ENCODE measurements at regions of chr5 and their contacts with region 1.

Region 1: DNA sequence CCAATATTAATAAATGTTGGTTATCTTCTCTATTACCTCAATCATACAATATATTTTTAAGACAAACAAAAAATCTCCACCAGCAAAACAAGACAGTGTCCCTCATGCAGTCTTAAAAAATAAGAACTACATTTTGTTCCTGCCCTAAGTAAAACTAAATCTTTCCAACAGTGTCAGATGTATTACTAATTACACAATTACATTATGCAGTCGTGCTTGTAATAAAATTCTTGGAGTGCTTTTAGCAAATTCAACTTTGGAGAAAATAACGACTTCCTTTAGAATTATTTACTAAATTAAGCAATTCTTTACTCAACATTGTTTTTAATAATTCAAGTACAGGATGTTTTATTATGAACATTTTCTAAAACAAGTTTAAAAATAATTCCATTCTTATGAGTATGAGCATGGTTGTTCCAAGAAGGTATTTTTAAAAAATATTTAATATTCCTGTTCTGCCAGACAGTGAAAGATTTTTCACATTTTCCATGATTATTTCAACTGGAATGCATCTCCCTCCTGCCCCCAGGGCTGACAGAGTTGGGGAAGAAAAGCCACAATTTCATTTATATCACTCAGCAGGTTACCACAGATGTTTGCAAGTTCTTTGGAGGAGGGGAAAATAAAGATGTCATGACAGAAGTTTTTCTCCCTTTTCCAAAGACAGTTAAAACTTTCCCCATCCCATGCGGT is 137.9 kb downstream of the FAM114A2 start:
- DNase-seq: peak; percentile 75
- ATAC-seq: peak; percentile 65
- H3K4me3 ChIP-seq: no peak overlapping the region
- H3K27ac ChIP-seq: peak overlapping the region; percentile 100
- H3K4me1 ChIP-seq: peaks cover 8% of the 10 kb centered on the region
- H3K27me3 ChIP-seq: no peaks in the 10 kb centered on the region
- CTCF ChIP-seq: no peak
- POLR2A ChIP-seq: no peak
- RAD21 ChIP-seq: no peak

Region 2: DNA sequence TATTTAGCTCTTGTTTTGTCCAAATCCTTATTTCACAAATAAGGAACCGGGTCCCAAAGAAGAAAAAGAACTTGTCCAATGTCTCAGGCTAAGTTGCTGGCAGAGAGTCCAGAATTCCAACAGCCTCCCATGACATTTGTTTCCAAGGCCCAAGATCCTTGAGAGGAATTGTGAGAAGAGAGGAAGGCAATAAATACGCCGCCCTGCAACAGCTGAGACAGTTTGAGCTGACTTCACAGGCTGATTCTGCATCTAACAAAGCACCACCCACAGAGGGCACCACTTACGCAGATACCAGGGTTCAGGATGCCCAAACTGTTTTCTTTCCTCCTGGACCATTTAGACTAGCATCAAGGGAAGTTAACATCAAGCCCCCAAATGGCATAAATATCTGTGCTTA is 73.5 kb before region 1 on chr5:
- CTCF ChIA-PET with region 1: no interaction called
- POLR2A ChIA-PET with region 1: no interaction called
- dilution Hi-C with region 1: no loop called
- in situ Hi-C with region 1: no loop called
- intact Hi-C with region 1: no loop called
- DNase-seq: no peak
- ATAC-seq: peak; percentile 49
- H3K4me3 ChIP-seq: no peak overlapping the region
- H3K27ac ChIP-seq: no peak overlapping the region
- H3K4me1 ChIP-seq: no peaks in the 10 kb centered on the region
- H3K27me3 ChIP-seq: no peaks in the 10 kb centered on the region
- CTCF ChIP-seq: peak; percentile 31; the same call in 1 of the 2 replicates
- POLR2A ChIP-seq: no peak
- RAD21 ChIP-seq: peak; percentile 25

Region 3: GRCh38 chr5:153883854-153884611 is 16.8 kb before region 1 on chr5:
- CTCF ChIA-PET with region 1: no interaction called
- POLR2A ChIA-PET with region 1: no interaction called
- dilution Hi-C with region 1: no loop called
- in situ Hi-C with region 1: no loop called
- intact Hi-C with region 1: loop called (anchors 2 kb)
- DNase-seq: peak; percentile 73
- ATAC-seq: peak; percentile 94
- H3K4me3 ChIP-seq: no peak overlapping the region
- H3K27ac ChIP-seq: peak overlapping the region; percentile 74; the same call in 1 of the 2 replicates
- H3K4me1 ChIP-seq: peaks cover 7% of the 10 kb centered on the region
- H3K27me3 ChIP-seq: no peaks in the 10 kb centered on the region
- CTCF ChIP-seq: no peak
- POLR2A ChIP-seq: no peak
- RAD21 ChIP-seq: no peak

Region 4: GRCh38 chr5:153959134-153959957 is 58.5 kb after region 1 on chr5:
- CTCF ChIA-PET with region 1: no interaction called
- POLR2A ChIA-PET with region 1: no interaction called
- dilution Hi-C with region 1: no loop called
- in situ Hi-C with region 1: no loop called
- intact Hi-C with region 1: loop called (anchors 2 kb)
- DNase-seq: peak; percentile 45
- ATAC-seq: peak; percentile 88
- H3K4me3 ChIP-seq: no peak overlapping the region
- H3K27ac ChIP-seq: peak overlapping the region; percentile 67; the same call in 1 of the 2 replicates
- H3K4me1 ChIP-seq: peaks cover 14% of the 10 kb centered on the region
- H3K27me3 ChIP-seq: no peaks in the 10 kb centered on the region
- CTCF ChIP-seq: no peak
- POLR2A ChIP-seq: no peak
- RAD21 ChIP-seq: no peak